ENCODE measurements at regions of chr2 and their contacts with region 1.

Region 1: DNA sequence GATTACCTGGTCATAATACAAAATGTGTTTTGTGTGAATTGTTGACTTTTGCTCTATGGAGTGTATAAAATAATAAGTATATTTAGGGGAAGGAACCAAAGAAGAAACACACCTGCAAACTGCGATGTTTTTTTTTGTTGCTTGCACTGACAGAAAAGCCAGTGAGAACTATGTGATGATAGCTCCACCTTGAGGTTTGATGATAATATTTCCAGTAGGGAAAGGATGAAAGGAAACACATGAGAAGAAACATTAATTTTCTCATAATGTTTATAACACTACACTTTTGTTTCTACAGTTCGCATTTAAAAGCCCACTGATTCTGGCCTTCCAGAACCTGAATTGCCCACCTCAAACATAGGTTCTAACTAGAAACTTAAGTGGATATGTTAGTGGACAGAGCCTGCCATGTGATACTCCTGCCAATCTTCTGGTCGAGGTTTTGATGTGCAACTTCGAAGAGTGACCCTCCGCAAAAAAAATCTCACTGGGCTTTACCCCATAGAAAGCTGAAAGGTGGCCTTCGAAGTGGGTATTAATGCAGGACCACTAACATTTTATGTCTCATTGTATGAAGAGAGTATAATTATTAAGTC is 476.4 kb upstream of the SPHKAP start:
- DNase-seq: no peak
- ATAC-seq: peak in 2 of 4 donors; percentile 62 to 74
- H3K4me3 ChIP-seq: no peak overlapping the region
- H3K27ac ChIP-seq: no peak overlapping the region
- H3K4me1 ChIP-seq: peaks cover 0 to 10% (median 0%) of the 10 kb centered on the region in 12 donors
- H3K27me3 ChIP-seq: no peaks in the 10 kb centered on the region
- CTCF ChIP-seq: peak; percentile 15 to 61 (median 47)
- POLR2A ChIP-seq: no peak

Region 2: GRCh38 chr2:227890495-227891079 is 767.3 kb before region 1 on chr2:
- intact Hi-C with region 1: loop called in 1 of 10 experiments (anchors 10 kb)
- DNase-seq: no peak
- ATAC-seq: peak in 2 of 4 donors; percentile 66 to 79
- H3K4me3 ChIP-seq: no peak overlapping the region
- H3K27ac ChIP-seq: no peak overlapping the region
- H3K4me1 ChIP-seq: no peaks in the 10 kb centered on the region
- H3K27me3 ChIP-seq: no peaks in the 10 kb centered on the region
- CTCF ChIP-seq: peak; percentile 46 to 75 (median 68)
- POLR2A ChIP-seq: no peak

Region 3: DNA sequence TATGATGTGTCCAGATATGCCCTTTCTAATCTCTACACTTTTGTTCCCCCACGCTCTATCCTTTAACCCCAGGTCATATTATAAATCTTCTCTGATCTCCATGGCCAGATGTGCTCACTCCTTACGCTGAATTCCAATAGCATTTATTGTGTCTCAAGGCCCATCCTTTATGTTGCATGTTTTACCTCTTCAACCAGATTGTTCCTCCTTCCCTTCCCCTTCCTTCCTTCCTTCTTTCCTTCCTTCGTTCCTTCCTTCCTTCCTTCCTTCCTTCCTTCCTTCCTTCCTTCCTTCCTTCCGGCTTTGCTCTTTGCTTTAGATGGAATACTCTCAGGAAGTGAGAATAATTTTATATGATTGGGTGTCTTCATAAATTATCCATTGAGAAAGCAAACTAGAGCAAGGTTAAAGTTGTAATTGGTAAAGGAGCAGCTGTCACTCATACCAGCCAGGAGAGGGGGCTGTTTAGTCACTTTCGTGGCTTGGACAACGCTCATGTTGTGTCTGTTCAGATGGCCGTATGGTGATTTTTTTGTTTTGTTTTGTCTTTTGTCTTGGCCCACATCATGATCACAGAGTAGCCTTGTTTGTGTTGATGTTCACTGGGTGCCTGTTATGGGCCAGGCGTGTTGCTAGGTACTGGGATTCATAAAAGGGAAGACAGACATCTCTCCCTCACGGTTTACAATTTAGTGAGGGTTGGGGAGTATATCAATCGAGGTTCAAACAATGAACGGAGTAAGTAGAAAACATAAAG is 718.5 kb before region 1 on chr2:
- intact Hi-C with region 1: loop called in 2 of 10 experiments (anchors 5 to 10 kb)
- DNase-seq: peak in 1 of 5 donors; percentile 9
- ATAC-seq: peak in 3 of 4 donors; percentile 54 to 57 (median 56)
- H3K4me3 ChIP-seq: no peak overlapping the region
- H3K27ac ChIP-seq: no peak overlapping the region
- H3K4me1 ChIP-seq: no peaks in the 10 kb centered on the region
- H3K27me3 ChIP-seq: no peaks in the 10 kb centered on the region
- CTCF ChIP-seq: peak in 11 of 12 donors; percentile 14 to 57 (median 38)
- POLR2A ChIP-seq: no peak

Region 4: GRCh38 chr2:228048838-228049490 is 608.9 kb before region 1 on chr2:
- intact Hi-C with region 1: loop called (anchors 2 to 5 kb)
- DNase-seq: peak in 2 of 5 donors; percentile 9 to 30
- ATAC-seq: peak; percentile 87 to 96 (median 90)
- H3K4me3 ChIP-seq: no peak overlapping the region
- H3K27ac ChIP-seq: peak overlapping the region in 1 of 12 donors; percentile 14
- H3K4me1 ChIP-seq: peaks cover 0 to 11% (median 0%) of the 10 kb centered on the region in 12 donors
- H3K27me3 ChIP-seq: no peaks in the 10 kb centered on the region
- CTCF ChIP-seq: peak; percentile 19 to 64 (median 48)
- POLR2A ChIP-seq: no peak

Region 5: GRCh38 chr2:228318218-228318617 is 339.7 kb before region 1 on chr2:
- intact Hi-C with region 1: loop called in 7 of 10 experiments (anchors 5 to 10 kb)
- DNase-seq: peak in 4 of 5 donors; percentile 16 to 48 (median 32)
- ATAC-seq: peak; percentile 61 to 88 (median 80)
- H3K4me3 ChIP-seq: no peak overlapping the region
- H3K27ac ChIP-seq: peak overlapping the region in 1 of 12 donors; percentile 43
- H3K4me1 ChIP-seq: peaks cover 0 to 19% (median 9%) of the 10 kb centered on the region in 12 donors
- H3K27me3 ChIP-seq: no peaks in the 10 kb centered on the region
- CTCF ChIP-seq: peak; percentile 20 to 58 (median 44)
- POLR2A ChIP-seq: no peak

Measured in heart left ventricle (tissue), 16 donors.